CD8-positive, alpha-beta T cell (primary cell): ENCODE measurements at regions of chr5 and their contacts with region 1.

Region 1: DNA sequence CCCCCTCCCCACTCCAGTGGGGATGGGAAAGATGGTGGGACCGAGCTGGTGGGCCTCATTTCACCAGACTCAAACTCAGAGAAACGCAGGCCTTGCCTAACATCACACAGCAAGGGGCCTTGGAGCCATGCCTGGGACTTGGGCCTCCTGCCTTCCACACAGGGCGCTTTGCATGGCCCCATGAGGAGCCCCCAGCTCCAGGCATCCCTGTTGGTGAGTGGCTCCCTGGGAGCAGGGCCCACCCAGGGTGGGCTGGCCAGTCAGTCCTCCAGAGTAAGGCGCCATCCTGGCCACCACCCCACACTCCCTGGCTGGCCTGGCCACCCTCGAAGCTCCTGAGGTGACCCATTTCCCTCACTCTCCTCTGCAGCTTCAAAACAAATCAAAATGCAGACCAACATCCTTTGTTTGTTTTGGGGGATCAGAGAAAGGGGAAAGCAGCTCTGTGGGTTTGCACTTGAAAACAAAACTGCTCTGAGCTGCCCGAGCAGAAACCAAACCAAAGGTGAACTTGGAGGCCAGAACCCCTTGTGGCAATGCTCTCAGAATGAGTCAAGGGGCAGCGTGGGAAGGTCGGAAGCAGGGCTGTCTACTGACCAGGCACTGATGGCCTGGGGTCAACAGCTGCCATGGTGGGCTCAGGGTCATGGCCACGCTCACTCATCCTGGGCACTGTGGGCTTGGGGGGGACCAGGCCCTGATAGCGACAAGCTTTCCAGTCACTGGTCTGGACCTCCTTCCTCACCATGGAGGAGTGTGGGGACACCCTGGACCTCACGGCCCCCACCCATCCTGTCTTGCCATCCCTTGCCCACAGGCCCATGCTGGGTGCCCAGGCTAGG is 37.0 kb upstream of the VDAC1 start:
- DNase-seq: peak in 1 of 9 experiments; percentile 45
- ATAC-seq: no peak
- H3K4me3 ChIP-seq: no peak overlapping the region
- H3K4me3 Mint-ChIP-seq: peak overlapping the region; percentile 60
- H3K27ac ChIP-seq: no peak overlapping the region
- H3K27ac Mint-ChIP-seq: peak overlapping the region; percentile 87
- H3K4me1 ChIP-seq: peaks cover 52% of the 10 kb centered on the region
- H3K4me1 Mint-ChIP-seq: peaks cover 61% of the 10 kb centered on the region
- H3K27me3 ChIP-seq: no peaks in the 10 kb centered on the region
- H3K27me3 Mint-ChIP-seq: no peaks in the 10 kb centered on the region
- CTCF ChIP-seq: no peak

Region 2: GRCh38 chr5:133996683-133997252 is 45.0 kb before region 1 on chr5:
- CTCF ChIA-PET with region 1: no interaction called
- POLR2A ChIA-PET with region 1: no interaction called
- intact Hi-C with region 1: no loop called
- DNase-seq: peak in 2 of 9 experiments; percentile 33 to 46
- ATAC-seq: peak; percentile 57
- H3K4me3 ChIP-seq: no peak overlapping the region
- H3K4me3 Mint-ChIP-seq: no peak overlapping the region
- H3K27ac ChIP-seq: no peak overlapping the region
- H3K27ac Mint-ChIP-seq: no peak overlapping the region
- H3K4me1 ChIP-seq: peaks cover 5% of the 10 kb centered on the region
- H3K4me1 Mint-ChIP-seq: peaks cover 68% of the 10 kb centered on the region
- H3K27me3 ChIP-seq: no peaks in the 10 kb centered on the region
- H3K27me3 Mint-ChIP-seq: no peaks in the 10 kb centered on the region
- CTCF ChIP-seq: peak; percentile 44

Region 3: GRCh38 chr5:134018154-134018985 is 23.4 kb before region 1 on chr5:
- CTCF ChIA-PET with region 1: interaction called, 12 read pairs
- POLR2A ChIA-PET with region 1: no interaction called
- intact Hi-C with region 1: no loop called
- DNase-seq: no peak
- ATAC-seq: no peak
- H3K4me3 ChIP-seq: no peak overlapping the region
- H3K4me3 Mint-ChIP-seq: no peak overlapping the region
- H3K27ac ChIP-seq: no peak overlapping the region
- H3K27ac Mint-ChIP-seq: no peak overlapping the region
- H3K4me1 ChIP-seq: no peaks in the 10 kb centered on the region
- H3K4me1 Mint-ChIP-seq: no peaks in the 10 kb centered on the region
- H3K27me3 ChIP-seq: no peaks in the 10 kb centered on the region
- H3K27me3 Mint-ChIP-seq: no peaks in the 10 kb centered on the region
- CTCF ChIP-seq: no peak

Region 4: DNA sequence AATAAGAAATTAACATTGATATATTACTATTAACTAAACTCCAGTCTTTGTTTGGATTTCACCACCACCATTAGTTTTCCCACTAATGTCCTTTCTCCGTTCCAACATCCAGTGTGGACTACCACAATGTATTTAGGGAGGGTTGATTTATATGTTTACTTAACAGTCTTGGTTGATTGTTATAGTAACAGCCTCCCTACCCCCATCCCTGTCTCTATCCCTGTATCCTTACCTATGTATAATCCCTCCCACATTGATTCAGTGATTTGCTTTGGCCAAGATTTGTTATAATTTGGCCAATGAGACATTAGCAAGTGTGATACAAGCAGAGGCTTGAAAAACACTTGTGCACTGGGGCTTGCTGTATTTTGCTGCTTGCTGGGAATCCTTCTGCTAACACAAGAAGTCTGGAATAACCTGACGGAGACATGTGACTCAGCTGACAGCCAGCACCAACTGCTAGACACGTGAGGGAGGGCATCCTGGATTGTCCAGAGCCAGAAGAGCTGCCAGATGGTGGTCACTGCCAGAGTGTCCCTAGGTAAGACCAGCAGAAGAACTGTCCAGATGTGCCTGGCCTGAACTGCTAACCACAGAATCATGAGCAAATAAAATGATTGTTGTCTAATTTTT is 21.5 kb after region 1 on chr5:
- CTCF ChIA-PET with region 1: interaction called, 37 read pairs
- POLR2A ChIA-PET with region 1: interaction called, 3 read pairs
- intact Hi-C with region 1: no loop called
- DNase-seq: no peak
- ATAC-seq: no peak
- H3K4me3 ChIP-seq: no peak overlapping the region
- H3K4me3 Mint-ChIP-seq: no peak overlapping the region
- H3K27ac ChIP-seq: no peak overlapping the region
- H3K27ac Mint-ChIP-seq: no peak overlapping the region
- H3K4me1 ChIP-seq: peaks cover 3% of the 10 kb centered on the region
- H3K4me1 Mint-ChIP-seq: peaks cover 15% of the 10 kb centered on the region
- H3K27me3 ChIP-seq: no peaks in the 10 kb centered on the region
- H3K27me3 Mint-ChIP-seq: no peaks in the 10 kb centered on the region
- CTCF ChIP-seq: no peak

Region 5: DNA sequence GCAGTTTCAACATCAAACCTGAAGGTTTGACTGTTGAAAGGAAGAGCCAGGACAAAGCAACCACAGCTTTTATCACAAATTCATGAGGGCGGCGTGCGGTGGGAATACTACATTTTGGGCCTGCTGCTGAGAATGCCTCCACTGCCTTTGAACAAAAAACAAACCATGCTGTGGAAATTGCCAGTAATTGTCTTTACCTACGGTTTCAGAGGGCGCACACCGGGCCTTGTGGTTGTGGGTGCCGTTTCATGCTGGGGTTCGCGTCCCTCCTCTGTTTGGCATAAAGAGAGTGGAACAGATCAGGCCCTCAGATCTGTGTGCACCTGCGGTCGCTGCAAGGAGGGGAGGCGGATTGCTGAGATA is 45.1 kb after region 1 on chr5:
- CTCF ChIA-PET with region 1: interaction called, 45 read pairs
- POLR2A ChIA-PET with region 1: interaction called, 10 read pairs
- intact Hi-C with region 1: loop called in 1 of 2 experiments (anchors 1 kb)
- DNase-seq: peak; percentile 51 to 88 (median 81)
- ATAC-seq: peak; percentile 68
- H3K4me3 ChIP-seq: peak overlapping the region in 1 of 2 experiments; percentile 5
- H3K4me3 Mint-ChIP-seq: peak overlapping the region; percentile 64
- H3K27ac ChIP-seq: peak overlapping the region; percentile 16 to 28
- H3K27ac Mint-ChIP-seq: peak overlapping the region; percentile 89
- H3K4me1 ChIP-seq: peaks cover 87% of the 10 kb centered on the region
- H3K4me1 Mint-ChIP-seq: peaks cover 85% of the 10 kb centered on the region
- H3K27me3 ChIP-seq: peaks cover 0 to 2% of the 10 kb centered on the region in 2 experiments
- H3K27me3 Mint-ChIP-seq: no peaks in the 10 kb centered on the region
- CTCF ChIP-seq: no peak

Region 6: DNA sequence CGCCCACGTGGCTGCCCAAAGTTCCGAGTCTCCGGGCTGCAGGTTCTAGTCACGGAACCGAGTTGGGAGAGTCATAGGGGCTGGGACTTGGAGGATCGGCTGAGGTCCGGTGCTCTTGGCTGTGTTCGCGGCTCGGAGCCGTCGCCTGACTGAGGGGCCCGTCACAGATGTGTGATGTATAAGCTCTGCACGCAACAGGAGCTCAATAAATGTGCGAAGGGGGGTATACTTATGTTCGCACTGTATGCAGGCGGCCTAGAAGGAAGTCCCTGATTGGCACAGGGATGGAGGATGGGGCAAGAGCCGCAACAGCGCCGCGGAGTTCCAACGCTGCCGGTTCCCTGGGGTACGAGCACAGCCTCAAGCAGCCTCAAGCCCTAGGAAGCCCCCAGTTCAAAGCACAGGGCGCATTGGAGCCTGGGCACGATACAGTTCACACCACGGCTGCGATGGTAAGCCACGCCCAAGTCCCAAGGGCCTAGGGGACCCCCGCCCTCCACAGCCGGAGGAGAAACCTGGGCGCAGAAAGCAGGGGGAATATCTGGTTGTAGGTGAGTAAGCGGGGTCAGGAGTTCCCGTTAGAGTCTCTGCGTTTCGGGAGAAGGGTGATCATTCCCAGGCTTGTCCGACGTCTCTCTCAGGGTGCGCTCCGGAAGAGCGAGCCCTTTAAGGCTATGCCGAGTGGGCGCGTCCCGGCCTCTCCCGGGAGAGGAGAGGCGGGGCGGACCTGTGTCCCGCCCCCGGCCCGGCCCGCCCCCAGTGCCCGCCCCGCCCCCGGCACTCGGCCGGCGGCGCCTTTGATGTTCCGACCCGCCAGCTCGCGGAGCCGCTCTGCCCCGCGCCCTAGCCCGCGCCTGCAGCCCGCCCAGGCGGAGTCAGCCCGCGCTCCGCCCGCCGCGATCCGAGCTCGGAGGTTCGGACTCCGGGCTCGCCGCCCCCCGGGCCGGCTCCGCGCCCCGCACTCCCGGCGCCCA is 72.4 kb after region 1 on chr5 and contains the start of gene TCF7:
- CTCF ChIA-PET with region 1: interaction called, 162 read pairs
- POLR2A ChIA-PET with region 1: interaction called, 249 read pairs
- intact Hi-C with region 1: loop called in 1 of 2 experiments (anchors 1 kb)
- DNase-seq: peak; percentile 67 to 92 (median 82)
- ATAC-seq: peak; percentile 67
- H3K4me3 ChIP-seq: peak within 1 kb of the TSS; percentile 78 to 99
- H3K4me3 Mint-ChIP-seq: peak within 1 kb of the TSS; percentile 95
- H3K27ac ChIP-seq: peak within 1 kb of the TSS; percentile 71 to 72
- H3K27ac Mint-ChIP-seq: peak within 1 kb of the TSS; percentile 96
- H3K4me1 ChIP-seq: peaks cover 37% of the 10 kb centered on the region
- H3K4me1 Mint-ChIP-seq: peaks cover 53% of the 10 kb centered on the region
- H3K27me3 ChIP-seq: no peaks in the 10 kb centered on the region
- H3K27me3 Mint-ChIP-seq: no peaks in the 10 kb centered on the region
- CTCF ChIP-seq: no peak
- total RNA-seq, gene TCF7: 517 to 538 TPM

Region 7: DNA sequence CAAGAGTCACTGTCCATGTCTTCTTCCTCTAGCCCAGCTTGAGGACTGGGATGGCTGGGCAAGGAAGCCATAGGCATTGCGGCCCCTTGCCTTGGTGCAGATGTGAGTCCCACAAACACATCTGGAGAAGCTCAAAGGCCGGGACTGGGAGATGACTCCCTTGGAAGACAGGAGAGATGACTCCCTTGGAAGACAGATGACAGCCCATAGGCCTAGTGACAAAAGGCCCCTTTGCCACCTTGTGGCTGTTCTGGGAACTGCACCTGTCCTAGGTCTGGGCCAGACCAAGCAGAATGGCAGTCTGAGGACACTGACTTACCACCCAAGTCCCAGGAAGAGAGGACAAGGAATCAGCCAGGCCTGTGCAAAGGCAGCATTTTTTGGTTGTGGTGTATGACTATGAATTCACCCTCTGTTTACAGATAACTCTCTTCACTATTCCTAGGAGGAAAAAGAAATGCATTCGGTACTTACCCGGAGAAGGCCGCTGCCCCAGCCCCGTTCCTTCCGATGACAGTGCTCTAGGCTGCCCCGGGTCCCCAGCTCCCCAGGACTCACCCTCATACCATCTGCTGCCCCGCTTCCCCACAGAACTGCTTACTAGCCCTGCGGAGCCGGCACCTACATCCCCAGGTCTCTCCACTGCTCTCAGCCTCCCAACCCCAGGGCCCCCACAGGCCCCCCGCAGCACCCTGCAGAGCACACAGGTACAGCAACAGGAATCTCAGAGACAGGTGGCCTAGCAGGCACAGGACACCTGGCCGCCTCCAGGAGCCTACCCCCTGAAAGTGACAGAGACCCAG is 104.2 kb after region 1 on chr5:
- CTCF ChIA-PET with region 1: interaction called, 773 read pairs
- POLR2A ChIA-PET with region 1: interaction called, 185 read pairs
- intact Hi-C with region 1: loop called (anchors 1 kb)
- DNase-seq: peak; percentile 73 to 91 (median 84)
- ATAC-seq: peak; percentile 72
- H3K4me3 ChIP-seq: no peak overlapping the region
- H3K4me3 Mint-ChIP-seq: no peak overlapping the region
- H3K27ac ChIP-seq: peak overlapping the region in 1 of 2 experiments; percentile 37
- H3K27ac Mint-ChIP-seq: peak overlapping the region; percentile 83
- H3K4me1 ChIP-seq: peaks cover 22% of the 10 kb centered on the region
- H3K4me1 Mint-ChIP-seq: peaks cover 69% of the 10 kb centered on the region
- H3K27me3 ChIP-seq: no peaks in the 10 kb centered on the region
- H3K27me3 Mint-ChIP-seq: no peaks in the 10 kb centered on the region
- CTCF ChIP-seq: peak; percentile 86

Region 8: DNA sequence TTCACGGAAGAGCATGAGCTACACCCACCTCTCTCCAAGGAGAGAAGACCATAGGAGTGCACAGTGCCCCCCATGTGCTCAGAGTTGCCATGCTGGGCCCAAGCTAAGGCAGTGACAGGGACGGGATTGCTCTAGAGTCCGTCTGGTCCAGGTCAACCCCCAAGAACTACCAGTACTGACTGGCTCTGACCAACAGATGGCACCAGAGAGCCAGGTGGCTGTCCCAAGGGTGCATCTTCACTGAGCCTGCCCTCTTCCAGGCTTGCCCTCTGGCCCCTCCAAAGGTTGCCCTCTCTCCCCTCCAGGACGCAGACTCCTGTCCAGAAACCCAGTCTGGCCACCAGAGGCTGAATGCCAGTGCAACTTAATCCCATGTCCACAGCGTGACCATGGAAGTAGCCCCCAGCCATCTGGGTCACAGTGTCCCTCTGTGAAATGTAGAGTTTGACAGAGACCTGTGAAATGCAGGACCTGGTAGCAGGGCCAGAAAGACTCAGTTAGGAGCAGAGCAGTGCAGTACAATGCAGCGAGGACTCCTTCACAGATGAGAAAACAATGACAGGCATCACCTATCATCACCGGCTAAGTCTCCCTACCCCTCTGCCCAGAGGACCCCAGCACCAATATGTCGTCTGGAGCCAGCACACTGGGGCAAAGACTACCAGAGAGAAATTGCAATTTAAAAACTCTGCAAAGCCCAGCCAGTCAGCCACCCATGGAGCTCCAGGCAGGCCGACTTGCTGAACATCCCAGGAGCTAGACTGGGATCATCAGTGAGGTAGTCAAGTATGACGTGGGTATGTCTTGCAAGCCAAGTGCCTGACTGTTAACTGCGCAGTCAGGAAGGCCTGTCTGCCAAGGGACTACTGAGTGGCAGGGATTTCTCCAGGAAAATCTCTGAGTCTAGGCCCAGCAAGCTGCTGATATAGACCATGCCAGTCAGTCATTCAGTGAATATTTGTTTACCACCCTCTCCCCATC is 142.7 kb after region 1 on chr5:
- CTCF ChIA-PET with region 1: interaction called, 16 read pairs
- POLR2A ChIA-PET with region 1: no interaction called
- intact Hi-C with region 1: no loop called
- DNase-seq: peak; percentile 62 to 84 (median 77)
- ATAC-seq: peak; percentile 98
- H3K4me3 ChIP-seq: no peak overlapping the region
- H3K4me3 Mint-ChIP-seq: no peak overlapping the region
- H3K27ac ChIP-seq: no peak overlapping the region
- H3K27ac Mint-ChIP-seq: no peak overlapping the region
- H3K4me1 ChIP-seq: peaks cover 4% of the 10 kb centered on the region
- H3K4me1 Mint-ChIP-seq: no peaks in the 10 kb centered on the region
- H3K27me3 ChIP-seq: no peaks in the 10 kb centered on the region
- H3K27me3 Mint-ChIP-seq: no peaks in the 10 kb centered on the region
- CTCF ChIP-seq: peak; percentile 84